AG04450 (cell line): ENCODE measurements at regions of chr17 and their contacts with region 1.

Region 1: DNA sequence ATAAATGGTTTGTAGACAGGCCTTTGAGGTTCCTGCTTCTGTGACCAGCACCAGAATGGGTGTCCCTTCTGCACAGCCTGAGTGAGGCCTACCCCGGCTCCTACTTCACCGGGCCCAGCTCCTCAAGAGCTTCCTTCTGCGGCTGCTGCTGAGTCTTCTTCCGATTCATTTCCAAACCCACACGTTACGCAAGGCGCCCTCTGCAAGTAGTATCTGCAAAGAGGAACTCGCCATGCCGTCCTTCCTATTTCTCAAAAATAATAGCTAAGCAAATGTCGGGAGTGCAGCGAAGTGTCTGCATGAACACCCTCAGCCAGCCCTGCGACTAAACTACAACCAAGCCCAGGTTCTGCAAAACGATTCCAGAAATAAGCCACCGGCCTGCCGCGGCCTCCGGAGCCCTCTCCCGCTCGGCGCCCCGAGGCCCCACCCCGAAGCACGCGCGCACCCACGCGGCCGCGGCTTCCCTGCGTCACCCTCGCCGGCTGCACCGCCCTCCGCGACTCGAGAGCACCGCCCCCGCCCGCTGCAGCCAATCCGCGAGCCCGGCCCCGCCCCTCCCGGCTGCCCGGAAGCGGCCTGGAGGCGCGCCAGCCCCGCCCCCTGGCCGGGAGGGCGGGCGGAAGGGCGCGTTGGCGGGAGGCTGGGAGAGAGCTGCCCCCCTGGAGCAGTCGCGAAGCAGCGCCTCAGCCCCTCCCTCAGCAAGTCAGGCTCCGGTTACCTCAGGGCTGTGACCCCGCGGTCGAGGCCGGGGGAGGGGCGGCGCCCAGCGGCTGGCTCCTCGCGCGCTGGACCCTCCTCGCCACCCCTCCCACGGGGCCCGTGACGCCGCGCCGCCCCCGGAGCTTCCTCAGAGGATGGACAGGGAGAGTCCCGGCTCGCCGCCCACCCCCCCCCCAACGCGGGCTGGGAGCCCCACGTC is 8.3 kb downstream of the MNT start:
- DNase-seq: peak; percentile 90
- H3K4me3 ChIP-seq: peak overlapping the region; percentile 64
- H3K27ac ChIP-seq: peak overlapping the region; percentile 96
- H3K27me3 ChIP-seq: no peaks in the 10 kb centered on the region
- CTCF ChIP-seq: no peak

Region 2: DNA sequence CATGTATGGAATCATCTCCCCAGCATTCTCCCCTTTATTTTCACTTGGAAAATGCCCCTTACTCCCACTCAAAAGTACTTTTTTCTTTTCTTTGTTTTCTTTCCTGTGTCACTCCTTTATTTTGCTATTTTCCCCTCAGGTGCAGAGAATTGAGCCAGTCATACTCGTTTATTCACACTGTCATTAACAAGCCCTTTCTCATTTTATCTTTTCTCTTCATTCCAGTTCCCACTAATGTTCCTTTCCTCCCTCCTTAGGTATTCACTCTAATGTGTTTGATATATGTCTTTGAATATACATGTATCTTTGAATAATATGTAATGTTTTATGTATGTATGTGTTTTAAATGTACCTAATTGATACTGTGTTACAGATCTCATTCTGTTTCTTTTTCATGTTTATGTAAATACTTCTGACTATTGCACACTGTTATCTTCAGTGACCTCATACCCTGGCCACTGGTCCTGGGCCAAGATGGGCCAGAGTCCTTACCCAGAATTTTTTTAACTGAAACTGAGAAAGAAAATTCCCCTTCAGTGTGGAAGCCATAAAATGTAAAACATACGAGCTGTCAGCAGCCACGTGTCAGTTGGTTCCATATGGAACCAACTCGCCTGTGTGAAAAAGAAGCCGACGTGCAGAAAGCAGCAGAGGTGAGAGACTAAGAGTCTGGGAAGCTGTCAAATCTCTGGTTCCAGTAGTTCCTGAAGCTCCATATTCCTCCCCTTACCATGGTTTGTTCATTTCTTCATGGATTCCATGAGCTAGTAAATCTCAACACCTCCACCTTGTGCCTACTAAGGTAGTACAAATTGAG is 83.0 kb before region 1 on chr17:
- CTCF ChIA-PET with region 1: no interaction called
- POLR2A ChIA-PET with region 1: no interaction called
- DNase-seq: peak; percentile 10
- H3K4me3 ChIP-seq: no peak overlapping the region
- H3K27ac ChIP-seq: no peak overlapping the region
- H3K27me3 ChIP-seq: no peaks in the 10 kb centered on the region
- CTCF ChIP-seq: no peak

Region 3: DNA sequence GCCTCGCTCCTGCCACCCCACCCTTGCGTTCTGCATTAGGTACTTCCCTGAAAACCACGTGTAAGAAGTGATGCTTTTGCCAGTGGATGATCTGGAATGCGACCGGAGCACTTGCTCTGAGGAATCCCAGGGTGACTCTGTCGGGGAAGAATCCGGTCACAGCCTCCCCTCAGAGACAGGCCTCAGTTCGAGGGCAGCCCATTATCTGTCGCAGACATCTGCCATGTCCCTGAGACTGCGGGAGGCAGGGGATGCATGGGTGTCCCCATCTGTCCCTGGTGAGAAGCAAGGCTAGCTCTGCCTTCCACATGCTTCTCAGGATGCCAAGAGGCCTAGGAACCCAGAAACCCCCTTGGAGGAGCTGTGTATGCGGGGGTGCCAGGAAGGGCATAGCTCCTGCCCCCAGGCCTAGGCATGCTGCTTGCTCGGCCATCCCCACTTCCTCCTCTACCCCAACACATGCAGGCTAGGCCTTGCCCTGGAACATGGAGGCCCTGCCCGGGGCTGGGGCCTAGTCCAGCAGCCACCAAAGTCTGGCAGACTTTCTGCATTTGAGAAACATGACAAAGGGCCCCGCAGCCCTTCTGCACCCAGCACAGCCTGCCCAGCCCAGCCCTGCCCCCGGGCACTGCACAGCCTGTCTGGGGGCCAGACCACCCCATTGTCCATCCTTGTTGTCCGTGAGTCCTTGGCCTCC is 12.1 kb before region 1 on chr17:
- CTCF ChIA-PET with region 1: interaction called, 33 read pairs
- POLR2A ChIA-PET with region 1: interaction called, 31 read pairs
- DNase-seq: no peak
- H3K4me3 ChIP-seq: no peak overlapping the region
- H3K27ac ChIP-seq: no peak overlapping the region
- H3K27me3 ChIP-seq: no peaks in the 10 kb centered on the region
- CTCF ChIP-seq: no peak

Region 4: DNA sequence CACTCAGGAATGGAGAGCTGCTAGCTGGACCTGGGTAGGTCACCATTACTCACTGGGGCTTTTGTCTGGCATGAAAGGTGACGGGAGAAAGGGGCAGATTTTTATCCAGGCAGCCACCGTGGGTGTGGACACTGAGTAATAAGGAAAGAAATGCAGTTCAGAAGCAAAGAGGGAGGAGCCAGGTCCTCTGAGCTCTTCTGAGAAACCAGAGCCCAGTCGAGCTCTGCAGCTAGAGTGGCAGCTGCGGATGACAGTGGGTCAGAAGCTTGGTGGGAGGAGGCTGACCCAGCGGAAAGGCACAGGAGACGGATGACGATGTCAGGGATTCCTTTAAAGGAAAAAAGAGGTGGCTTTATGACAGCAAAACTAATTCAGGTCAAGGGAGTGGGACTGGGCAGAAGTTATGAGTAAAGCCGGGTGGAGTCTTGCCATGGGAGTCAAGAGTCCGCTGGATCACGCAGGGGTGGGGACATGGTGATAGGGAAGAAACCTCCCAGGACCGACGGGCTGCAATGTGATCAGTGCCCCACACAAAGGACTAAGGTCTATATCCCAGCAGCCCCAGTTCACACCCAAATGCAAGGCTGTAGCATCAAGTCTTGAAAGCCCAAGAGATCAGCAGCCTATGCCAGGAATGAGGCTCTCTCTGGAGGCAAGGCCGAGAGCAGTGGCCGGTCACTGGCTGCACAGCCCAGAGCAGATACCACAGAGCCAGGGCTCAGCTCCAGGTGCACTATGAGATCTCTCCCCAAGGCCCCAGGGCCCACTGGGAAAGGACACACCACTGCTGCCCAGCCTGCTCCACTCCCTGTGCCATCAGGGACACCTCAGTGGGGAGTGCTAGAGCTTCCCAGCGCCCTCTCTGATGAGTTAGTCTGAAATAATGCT is 14.6 kb after region 1 on chr17:
- CTCF ChIA-PET with region 1: no interaction called
- POLR2A ChIA-PET with region 1: interaction called, 23 read pairs
- DNase-seq: no peak
- H3K4me3 ChIP-seq: no peak overlapping the region
- H3K27ac ChIP-seq: peak overlapping the region; percentile 95
- H3K27me3 ChIP-seq: no peaks in the 10 kb centered on the region
- CTCF ChIP-seq: no peak